Activated CD8-positive, alpha-beta memory T cell treated with anti-CD3 and anti-CD28 coated beads, Interleukin-2, amount 10 ng/mL, durations not matched to agents 7 days and 5 days (primary cell): ENCODE measurements at regions of chr22 and their contacts with region 1.

Region 1: GRCh38 chr22:20568989-20569769 is 61.8 kb downstream of the MED15 start:
- DNase-seq: peak; percentile 95
- ATAC-seq: peak; percentile 77
- H3K4me3 Mint-ChIP-seq: peak overlapping the region; percentile 45
- H3K27ac Mint-ChIP-seq: peak overlapping the region; percentile 93
- H3K4me1 Mint-ChIP-seq: peaks cover 77% of the 10 kb centered on the region
- H3K27me3 Mint-ChIP-seq: no peaks in the 10 kb centered on the region

Region 2: GRCh38 chr22:20437613-20438426 is 131.4 kb before region 1 on chr22 and contains the start of gene SCARF2:
- CTCF ChIA-PET with region 1: no interaction called
- DNase-seq: no peak
- ATAC-seq: peak; percentile 32
- H3K4me3 Mint-ChIP-seq: peak within 1 kb of the TSS; percentile 30
- H3K27ac Mint-ChIP-seq: no peak within 1 kb of the TSS
- H3K4me1 Mint-ChIP-seq: peaks cover 7% of the 10 kb centered on the region
- H3K27me3 Mint-ChIP-seq: peaks cover 50% of the 10 kb centered on the region
- total RNA-seq, gene SCARF2: 0.54 to 1.1 TPM

Region 3: GRCh38 chr22:20507253-20508066 is 61.7 kb before region 1 on chr22 and contains the start of gene MED15:
- CTCF ChIA-PET with region 1: interaction called, 35 read pairs
- DNase-seq: peak; percentile 95
- ATAC-seq: peak; percentile 89
- H3K4me3 Mint-ChIP-seq: peak within 1 kb of the TSS; percentile 97
- H3K27ac Mint-ChIP-seq: peak within 1 kb of the TSS; percentile 95
- H3K4me1 Mint-ChIP-seq: peaks cover 48% of the 10 kb centered on the region
- H3K27me3 Mint-ChIP-seq: no peaks in the 10 kb centered on the region
- total RNA-seq, gene MED15: 145 to 179 TPM

Region 4: DNA sequence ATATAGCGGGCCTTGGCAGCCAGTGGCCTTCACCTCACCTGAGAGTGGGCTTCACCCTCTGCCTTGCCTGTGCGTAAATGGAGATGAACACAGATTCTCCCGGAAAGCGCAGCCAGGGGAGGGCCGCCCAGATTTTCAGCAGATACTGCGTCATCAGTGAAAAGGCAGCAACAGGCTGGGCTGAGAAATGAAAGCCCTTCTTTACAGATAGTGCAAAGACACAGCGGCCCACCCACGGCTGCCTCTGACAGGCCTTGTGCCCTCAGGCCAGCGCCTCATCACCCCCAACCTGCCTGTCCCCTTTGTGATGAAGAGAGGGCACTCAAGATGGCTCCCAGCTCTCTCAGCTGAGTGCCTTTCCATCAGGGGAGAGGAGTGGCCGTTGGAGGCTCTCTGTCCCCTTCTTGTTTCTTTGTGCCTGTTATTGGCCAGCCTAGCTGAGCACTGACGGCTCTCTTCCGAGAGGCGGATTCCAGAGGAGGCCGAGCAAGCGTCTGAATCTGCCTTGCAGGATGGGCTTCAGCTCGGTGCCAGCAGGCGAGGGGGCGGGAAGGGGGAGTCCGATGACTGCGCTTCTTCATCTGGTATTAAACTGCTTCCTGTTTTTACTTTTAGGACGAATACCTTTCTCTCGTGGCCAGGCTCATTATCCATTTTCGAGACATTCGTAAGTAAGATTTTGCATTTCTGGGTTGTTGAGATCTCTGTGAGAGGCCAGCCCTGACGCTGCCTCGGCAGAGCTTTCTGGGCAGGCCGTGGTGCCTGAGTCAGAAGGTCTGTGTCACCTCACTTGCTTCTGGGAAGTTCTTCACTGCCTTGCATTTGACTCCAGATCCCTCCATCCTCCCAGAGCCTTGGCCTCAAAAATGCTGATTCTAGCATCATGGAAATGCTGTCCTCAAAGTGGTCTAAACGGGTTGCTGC is 18.1 kb before region 1 on chr22:
- CTCF ChIA-PET with region 1: interaction called, 406 read pairs
- DNase-seq: peak; percentile 77
- ATAC-seq: peak; percentile 51
- H3K4me3 Mint-ChIP-seq: peak overlapping the region; percentile 74
- H3K27ac Mint-ChIP-seq: peak overlapping the region; percentile 96
- H3K4me1 Mint-ChIP-seq: peaks cover 89% of the 10 kb centered on the region
- H3K27me3 Mint-ChIP-seq: no peaks in the 10 kb centered on the region